ENCODE measurements at regions of chr12 and their contacts with region 1.

Region 1: GRCh38 chr12:106386813-106387535 is 29.4 kb downstream of the POLR3B start:
- DNase-seq: no peak

Region 2: GRCh38 chr12:106415134-106415533 is 28.2 kb after region 1 on chr12:
- intact Hi-C with region 1: no loop called
- DNase-seq: no peak

Region 3: DNA sequence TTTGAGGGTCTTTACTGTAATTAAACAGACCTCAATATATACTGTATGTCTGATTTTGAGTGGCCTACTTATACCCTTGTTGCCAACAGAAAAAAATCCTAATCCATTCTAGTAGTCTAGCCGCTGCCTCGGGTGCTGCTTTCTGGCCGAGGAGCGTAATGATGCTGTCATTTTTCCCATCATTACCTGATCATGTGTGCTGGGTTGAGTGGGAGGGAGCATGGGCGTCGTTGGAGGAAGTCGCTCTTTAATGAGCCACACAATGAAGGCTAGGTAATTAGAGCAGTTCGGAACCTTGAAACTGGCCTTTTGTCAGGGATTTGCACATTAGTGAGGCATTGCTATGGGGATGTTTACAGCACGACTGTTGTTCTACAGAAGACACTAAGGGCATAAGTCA is 119.7 kb after region 1 on chr12:
- intact Hi-C with region 1: no loop called
- DNase-seq: no peak

Region 4: DNA sequence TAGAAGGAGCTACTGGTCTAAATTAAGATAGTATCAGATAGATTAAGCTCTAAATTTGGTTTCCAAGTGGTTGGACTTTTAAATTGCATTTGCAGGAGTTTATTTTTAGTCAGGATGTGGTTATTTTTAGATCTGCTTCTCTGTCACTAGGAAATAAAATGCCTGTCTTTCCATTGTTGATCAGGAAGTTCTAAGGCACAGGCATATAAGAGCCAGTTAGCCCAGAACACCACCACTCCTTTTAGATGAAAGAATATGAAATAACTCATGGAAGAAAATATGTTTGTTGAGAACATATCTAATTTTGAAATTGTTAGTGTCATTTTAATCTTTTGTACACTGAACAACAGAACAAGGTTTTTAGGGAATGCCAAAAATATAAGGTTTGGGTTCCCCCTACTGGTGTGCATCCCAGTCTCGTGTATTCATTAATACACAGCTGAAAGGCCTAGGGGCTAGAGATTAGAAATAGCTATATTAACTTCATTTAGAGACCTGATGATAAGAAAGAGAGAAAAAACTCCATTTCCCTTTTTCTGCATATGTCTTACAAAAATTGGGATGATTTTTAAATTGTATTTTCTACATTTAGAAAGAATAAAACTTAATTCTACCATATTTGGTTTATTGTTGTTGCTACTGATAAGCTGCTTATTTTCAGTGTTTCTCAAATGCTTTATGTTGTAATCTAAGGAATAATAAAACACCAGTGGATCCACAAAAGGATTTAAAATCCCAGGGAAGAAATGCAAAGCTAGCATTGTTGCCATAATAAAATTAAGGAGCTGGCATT is 454.7 kb after region 1 on chr12:
- intact Hi-C with region 1: loop called in 1 of 2 experiments (anchors 10 kb)
- DNase-seq: no peak

Region 5: DNA sequence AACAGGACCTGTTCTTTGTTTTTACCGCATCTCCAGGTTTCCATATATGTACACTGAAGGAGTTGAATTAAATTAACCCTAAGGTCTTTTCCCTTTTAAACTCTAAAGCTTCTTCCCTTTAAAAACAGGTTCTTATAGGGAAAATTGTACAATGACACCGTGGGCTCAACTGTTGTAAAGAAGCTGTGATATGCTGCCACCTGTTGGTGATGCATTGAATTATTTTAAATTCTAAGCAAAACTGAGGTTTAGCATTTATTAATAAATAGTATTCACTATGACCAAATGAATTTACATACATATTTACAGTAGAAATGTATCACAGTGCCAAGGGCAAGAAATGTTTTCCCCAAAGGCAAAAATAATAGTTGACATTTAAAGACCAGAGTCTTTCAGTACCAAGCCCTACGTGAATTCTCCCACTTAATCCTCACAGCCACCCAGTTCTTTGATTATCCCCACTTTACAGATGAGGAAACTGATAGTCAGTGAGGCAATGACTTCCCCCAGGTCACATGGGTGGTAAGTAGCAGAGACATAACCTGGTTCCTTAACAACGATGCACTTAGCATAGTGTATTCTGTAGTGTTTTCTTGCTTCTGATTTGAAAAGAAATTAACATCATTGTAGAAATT is 533.1 kb after region 1 on chr12:
- intact Hi-C with region 1: loop called (anchors 5 to 10 kb)
- DNase-seq: no peak

Region 6: GRCh38 chr12:107109741-107110719 is 723.1 kb after region 1 on chr12:
- intact Hi-C with region 1: no loop called
- DNase-seq: no peak